Heart right ventricle (tissue), 16 donors: ENCODE measurements at regions of chr5 and their contacts with region 1.

Region 1: GRCh38 chr5:35777358-35778087 is 79.2 kb upstream of the IL7R start:
- DNase-seq: peak in 1 of 2 donors; percentile 60
- ATAC-seq: peak in 1 of 8 donors; percentile 23
- H3K4me3 ChIP-seq: no peak overlapping the region
- H3K27ac ChIP-seq: no peak overlapping the region
- H3K4me1 ChIP-seq: peaks cover 0 to 28% (median 11%) of the 10 kb centered on the region in 9 donors
- H3K27me3 ChIP-seq: no peaks in the 10 kb centered on the region
- CTCF ChIP-seq: peak; percentile 35 to 69 (median 62)

Region 2: GRCh38 chr5:35651002-35651756 is 126.3 kb before region 1 on chr5:
- intact Hi-C with region 1: loop called in 1 of 10 experiments (anchors 10 kb)
- DNase-seq: no peak
- ATAC-seq: no peak
- H3K4me3 ChIP-seq: no peak overlapping the region
- H3K27ac ChIP-seq: no peak overlapping the region
- H3K4me1 ChIP-seq: no peaks in the 10 kb centered on the region
- H3K27me3 ChIP-seq: no peaks in the 10 kb centered on the region
- CTCF ChIP-seq: peak in 7 of 9 donors; percentile 29 to 59 (median 33)

Region 3: GRCh38 chr5:35884115-35884788 is 106.7 kb after region 1 on chr5:
- intact Hi-C with region 1: no loop called
- DNase-seq: no peak
- ATAC-seq: peak in 1 of 8 donors; percentile 48
- H3K4me3 ChIP-seq: no peak overlapping the region
- H3K27ac ChIP-seq: peak overlapping the region in 1 of 10 donors; percentile 22
- H3K4me1 ChIP-seq: peaks cover 0 to 14% (median 0%) of the 10 kb centered on the region in 9 donors
- H3K27me3 ChIP-seq: no peaks in the 10 kb centered on the region
- CTCF ChIP-seq: no peak